B cell (primary cell): ENCODE measurements at regions of chr2 and their contacts with region 1.

Region 1: GRCh38 chr2:3423492-3424175 is 44.1 kb downstream of the TRAPPC12 start:
- DNase-seq: peak; percentile 72
- ATAC-seq: peak; percentile 78
- H3K4me3 ChIP-seq: no peak overlapping the region
- H3K4me3 Mint-ChIP-seq: no peak overlapping the region
- H3K27ac ChIP-seq: no peak overlapping the region
- H3K27ac Mint-ChIP-seq: no peak overlapping the region
- H3K4me1 ChIP-seq: peaks cover 0 to 6% of the 10 kb centered on the region in 2 donors
- H3K4me1 Mint-ChIP-seq: peaks cover 7% of the 10 kb centered on the region
- H3K27me3 ChIP-seq: no peaks in the 10 kb centered on the region
- H3K27me3 Mint-ChIP-seq: no peaks in the 10 kb centered on the region
- CTCF ChIP-seq: peak; percentile 100

Region 2: GRCh38 chr2:3443506-3444073 is 20.0 kb after region 1 on chr2:
- CTCF ChIA-PET with region 1: interaction called, 25 read pairs
- POLR2A ChIA-PET with region 1: no interaction called
- intact Hi-C with region 1: no loop called
- DNase-seq: no peak
- ATAC-seq: no peak
- H3K4me3 ChIP-seq: no peak overlapping the region
- H3K4me3 Mint-ChIP-seq: no peak overlapping the region
- H3K27ac ChIP-seq: no peak overlapping the region
- H3K27ac Mint-ChIP-seq: no peak overlapping the region
- H3K4me1 ChIP-seq: no peaks in the 10 kb centered on the region
- H3K4me1 Mint-ChIP-seq: peaks cover 8% of the 10 kb centered on the region
- H3K27me3 ChIP-seq: no peaks in the 10 kb centered on the region
- H3K27me3 Mint-ChIP-seq: no peaks in the 10 kb centered on the region
- CTCF ChIP-seq: no peak

Region 3: GRCh38 chr2:3461801-3462492 is 38.3 kb after region 1 on chr2:
- CTCF ChIA-PET with region 1: interaction called, 30 read pairs
- POLR2A ChIA-PET with region 1: no interaction called
- intact Hi-C with region 1: loop called (anchors 1 kb)
- DNase-seq: peak; percentile 76
- ATAC-seq: peak; percentile 83
- H3K4me3 ChIP-seq: peak overlapping the region in 2 of 5 experiments; percentile 13 to 28
- H3K4me3 Mint-ChIP-seq: peak overlapping the region; percentile 67
- H3K27ac ChIP-seq: peak overlapping the region; percentile 48 to 81
- H3K27ac Mint-ChIP-seq: peak overlapping the region; percentile 93
- H3K4me1 ChIP-seq: peaks cover 6 to 11% of the 10 kb centered on the region in 2 donors
- H3K4me1 Mint-ChIP-seq: peaks cover 16% of the 10 kb centered on the region
- H3K27me3 ChIP-seq: no peaks in the 10 kb centered on the region
- H3K27me3 Mint-ChIP-seq: no peaks in the 10 kb centered on the region
- CTCF ChIP-seq: peak; percentile 99

Region 4: GRCh38 chr2:3651691-3652648 is 228.3 kb after region 1 on chr2:
- CTCF ChIA-PET with region 1: interaction called, 91 read pairs
- POLR2A ChIA-PET with region 1: interaction called, 7 read pairs
- intact Hi-C with region 1: no loop called
- DNase-seq: peak; percentile 70
- ATAC-seq: peak; percentile 70
- H3K4me3 ChIP-seq: peak overlapping the region; percentile 16 to 66 (median 46)
- H3K4me3 Mint-ChIP-seq: peak overlapping the region; percentile 93
- H3K27ac ChIP-seq: peak overlapping the region; percentile 53 to 54
- H3K27ac Mint-ChIP-seq: peak overlapping the region; percentile 86
- H3K4me1 ChIP-seq: peaks cover 14 to 15% of the 10 kb centered on the region in 2 donors
- H3K4me1 Mint-ChIP-seq: peaks cover 16% of the 10 kb centered on the region
- H3K27me3 ChIP-seq: peaks cover 0 to 16% (median 1%) of the 10 kb centered on the region in 4 experiments
- H3K27me3 Mint-ChIP-seq: no peaks in the 10 kb centered on the region
- CTCF ChIP-seq: no peak

Region 5: DNA sequence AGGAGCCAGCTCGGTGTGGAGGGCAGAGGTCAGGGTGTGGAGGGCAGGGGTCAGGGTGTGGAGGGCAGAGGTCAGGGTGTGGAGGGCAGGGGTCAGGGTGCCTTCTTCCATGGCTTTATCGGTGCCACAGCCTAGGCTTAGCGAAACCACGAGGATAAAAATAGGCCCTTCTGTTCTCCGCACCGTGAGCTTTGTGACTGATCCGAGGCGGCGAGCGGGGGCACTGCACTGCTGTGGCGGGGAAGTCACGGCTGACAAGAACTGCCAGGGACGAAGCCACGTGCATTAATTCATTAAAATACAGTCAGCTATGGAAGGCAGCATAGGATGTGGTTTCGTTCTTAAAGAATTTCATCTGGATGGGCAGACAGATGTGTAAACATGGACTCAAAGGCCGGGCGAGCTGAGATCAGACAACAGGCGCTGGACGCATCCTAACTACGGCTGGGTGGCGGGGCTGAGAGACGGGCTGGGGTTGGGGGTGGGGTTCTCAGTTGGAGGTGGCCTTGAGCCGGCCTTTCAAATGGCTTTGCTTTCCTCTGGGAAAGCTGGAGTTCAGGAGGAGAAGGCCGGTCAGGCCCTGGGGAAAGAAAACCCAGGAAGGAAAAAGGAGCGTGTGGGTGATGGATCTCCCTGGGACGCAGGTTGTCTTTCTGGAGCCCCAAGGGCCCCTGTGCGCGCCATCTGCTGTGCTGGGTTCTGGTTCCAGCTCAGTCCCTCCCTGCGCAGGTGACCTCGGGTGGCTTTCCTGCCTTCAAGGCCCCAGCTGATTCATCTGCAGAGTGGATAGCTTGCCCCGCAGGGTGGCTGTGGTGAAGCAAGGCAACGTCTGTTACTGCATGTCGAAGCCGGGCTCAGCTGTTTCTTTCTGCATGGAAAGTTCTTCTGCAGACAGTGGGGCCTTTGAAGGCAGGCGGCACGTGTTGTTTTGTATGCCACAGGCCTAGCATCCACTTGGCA is 233.4 kb after region 1 on chr2:
- CTCF ChIA-PET with region 1: interaction called, 91 read pairs
- POLR2A ChIA-PET with region 1: interaction called, 7 read pairs
- intact Hi-C with region 1: no loop called
- DNase-seq: no peak
- ATAC-seq: no peak
- H3K4me3 ChIP-seq: no peak overlapping the region
- H3K4me3 Mint-ChIP-seq: no peak overlapping the region
- H3K27ac ChIP-seq: no peak overlapping the region
- H3K27ac Mint-ChIP-seq: no peak overlapping the region
- H3K4me1 ChIP-seq: peaks cover 2 to 3% of the 10 kb centered on the region in 2 donors
- H3K4me1 Mint-ChIP-seq: peaks cover 17% of the 10 kb centered on the region
- H3K27me3 ChIP-seq: peaks cover 0 to 5% (median under 1%) of the 10 kb centered on the region in 4 experiments
- H3K27me3 Mint-ChIP-seq: no peaks in the 10 kb centered on the region
- CTCF ChIP-seq: no peak